ENCODE measurements at regions of chr16 and their contacts with region 1.

Region 1: GRCh38 chr16:78780808-78781207 is 681.4 kb downstream of the WWOX start:
- DNase-seq: no peak
- ATAC-seq: no peak
- H3K4me3 Mint-ChIP-seq: no peak overlapping the region
- H3K27ac Mint-ChIP-seq: no peak overlapping the region
- H3K4me1 Mint-ChIP-seq: peaks cover 8% of the 10 kb centered on the region
- H3K27me3 Mint-ChIP-seq: no peaks in the 10 kb centered on the region
- CTCF ChIP-seq: no peak

Region 2: GRCh38 chr16:78570399-78571141 is 210.2 kb before region 1 on chr16:
- CTCF ChIA-PET with region 1: no interaction called
- POLR2A ChIA-PET with region 1: no interaction called
- DNase-seq: no peak
- ATAC-seq: no peak
- H3K4me3 Mint-ChIP-seq: no peak overlapping the region
- H3K27ac Mint-ChIP-seq: no peak overlapping the region
- H3K4me1 Mint-ChIP-seq: no peaks in the 10 kb centered on the region
- H3K27me3 Mint-ChIP-seq: no peaks in the 10 kb centered on the region
- CTCF ChIP-seq: no peak

Region 3: GRCh38 chr16:78770353-78771091 is 10.3 kb before region 1 on chr16:
- CTCF ChIA-PET with region 1: interaction called, 21 read pairs
- POLR2A ChIA-PET with region 1: no interaction called
- DNase-seq: peak; percentile 92
- ATAC-seq: peak; percentile 86
- H3K4me3 Mint-ChIP-seq: no peak overlapping the region
- H3K27ac Mint-ChIP-seq: no peak overlapping the region
- H3K4me1 Mint-ChIP-seq: peaks cover 19% of the 10 kb centered on the region
- H3K27me3 Mint-ChIP-seq: no peaks in the 10 kb centered on the region
- CTCF ChIP-seq: peak; percentile 91

Measured in WTC11 (cell line).